Activated T-helper 1 cell treated with anti-CD3 and anti-CD28 coated beads, Interleukin-12 subunit alpha, Interleukin-12 subunit beta, Interleukin-2, Interleukin-4 antibody, amounts not matched to agents 30 ng/mL and 10 ng/mL and 1 ng/mL, durations not matched to agents 14 hours and 24 hours and 36 hours (primary cell): ENCODE measurements at regions of chr12 and their contacts with region 1.

Region 1: DNA sequence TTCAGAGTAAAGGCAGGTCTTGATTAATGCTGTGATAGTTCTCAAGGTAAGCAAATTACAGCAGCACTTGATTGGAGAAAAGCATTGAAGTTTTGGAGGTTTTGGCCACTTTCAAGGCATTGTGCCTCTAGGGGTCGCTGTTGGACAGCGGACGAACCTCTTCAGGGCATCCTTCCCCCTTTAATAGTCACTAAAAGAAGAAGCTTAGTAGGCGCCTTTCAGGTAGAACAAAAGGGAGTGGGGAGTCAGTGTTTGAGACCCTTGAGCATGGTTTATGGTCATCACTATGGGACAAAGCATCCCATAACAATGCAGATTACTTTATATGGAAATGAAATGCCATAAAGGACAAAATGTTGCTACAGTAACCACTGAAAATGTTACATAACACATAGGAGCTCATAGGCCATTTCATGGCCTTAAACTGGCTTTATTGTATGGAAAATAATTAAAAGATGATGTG is 199.5 kb upstream of the DCN start:
- DNase-seq: peak; percentile 68
- H3K4me3 Mint-ChIP-seq: peak overlapping the region; percentile 76
- H3K27ac Mint-ChIP-seq: no peak overlapping the region
- H3K4me1 Mint-ChIP-seq: peaks cover 10% of the 10 kb centered on the region
- H3K27me3 Mint-ChIP-seq: peaks cover 5% of the 10 kb centered on the region

Region 2: DNA sequence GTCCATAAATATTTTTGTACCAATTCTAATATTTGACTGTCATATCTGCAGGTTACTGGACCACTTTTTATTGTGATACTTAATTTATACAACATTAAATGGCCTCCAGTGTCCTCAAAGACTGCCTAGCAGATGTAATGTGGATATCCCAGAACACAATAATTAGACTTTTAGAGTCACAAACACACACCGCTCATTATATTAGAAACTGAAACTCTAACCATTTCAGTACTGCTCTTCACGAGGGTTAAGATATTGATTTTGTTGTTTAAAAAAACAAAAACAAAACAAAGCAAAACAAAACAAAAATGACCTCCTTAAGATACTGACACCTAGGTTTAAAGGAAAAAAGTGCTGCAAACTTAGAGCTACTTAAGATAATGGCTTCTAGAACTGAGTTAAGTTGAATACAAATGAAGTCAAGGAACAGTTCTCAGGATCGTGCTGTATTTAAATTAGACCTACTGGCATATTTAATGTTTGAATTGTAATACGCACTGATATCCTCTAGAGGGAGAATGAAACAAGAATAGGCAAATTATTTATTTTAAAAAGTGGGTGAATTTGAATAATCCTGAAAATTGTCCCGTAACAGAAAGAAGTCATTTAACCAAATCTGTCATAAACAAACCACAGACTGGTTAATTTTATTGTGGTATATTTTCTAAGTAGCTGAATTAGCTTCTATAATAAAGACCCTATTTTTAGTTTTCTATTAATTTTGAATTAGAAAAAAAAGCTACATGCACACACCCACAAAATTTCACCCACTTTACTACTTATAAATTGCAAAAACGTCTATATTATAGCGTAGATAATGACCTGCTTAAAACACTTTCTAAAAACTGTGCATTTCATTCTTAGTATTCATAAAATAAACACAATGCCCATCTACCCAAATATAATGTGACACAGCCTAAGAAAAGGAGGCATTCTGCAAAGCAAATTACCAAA is 195.8 kb after region 1 on chr12:
- intact Hi-C with region 1: loop called (anchors 5 kb)
- DNase-seq: no peak
- H3K4me3 Mint-ChIP-seq: peak overlapping the region; percentile 62
- H3K27ac Mint-ChIP-seq: no peak overlapping the region
- H3K4me1 Mint-ChIP-seq: peaks cover 6% of the 10 kb centered on the region
- H3K27me3 Mint-ChIP-seq: peaks cover 15% of the 10 kb centered on the region

Region 3: DNA sequence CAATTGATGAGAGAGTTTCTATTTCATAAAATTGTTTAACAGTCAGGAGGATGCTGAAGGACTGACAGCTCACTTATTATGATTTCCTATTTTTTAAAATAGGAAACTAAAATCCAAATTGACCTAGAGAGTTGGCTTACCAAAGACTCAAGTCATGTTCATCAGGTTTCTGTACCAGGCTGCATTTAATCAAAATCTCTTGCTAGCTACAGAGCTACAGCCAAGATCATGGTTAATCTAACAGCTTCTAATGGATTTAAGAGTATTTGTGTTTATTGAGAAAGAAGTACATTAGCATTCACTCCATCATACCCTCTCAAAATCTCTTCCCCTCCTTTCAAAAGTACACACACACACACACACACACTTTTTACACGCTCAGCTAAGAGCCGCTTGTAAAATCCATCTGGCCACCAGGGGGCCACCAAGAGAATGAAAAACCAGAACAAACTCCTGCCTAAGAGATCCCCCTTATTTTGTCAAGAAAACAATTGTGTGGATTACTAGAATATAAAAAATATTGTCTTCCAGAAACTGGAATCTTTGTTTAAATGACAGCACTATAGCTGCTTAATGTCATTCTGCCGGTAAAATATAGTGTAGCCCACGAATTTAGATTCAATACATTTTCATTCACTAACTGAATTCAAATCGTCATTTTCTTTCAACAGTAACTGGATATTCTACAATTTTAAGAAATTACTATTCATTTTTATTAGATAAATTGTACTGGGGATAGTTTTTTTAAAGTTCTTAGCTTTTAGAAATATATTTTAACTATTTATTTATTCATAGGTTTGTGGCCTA is 429.6 kb after region 1 on chr12:
- intact Hi-C with region 1: loop called (anchors 1 kb)
- DNase-seq: peak; percentile 35
- H3K4me3 Mint-ChIP-seq: no peak overlapping the region
- H3K27ac Mint-ChIP-seq: no peak overlapping the region
- H3K4me1 Mint-ChIP-seq: peaks cover 10% of the 10 kb centered on the region
- H3K27me3 Mint-ChIP-seq: no peaks in the 10 kb centered on the region

Region 4: DNA sequence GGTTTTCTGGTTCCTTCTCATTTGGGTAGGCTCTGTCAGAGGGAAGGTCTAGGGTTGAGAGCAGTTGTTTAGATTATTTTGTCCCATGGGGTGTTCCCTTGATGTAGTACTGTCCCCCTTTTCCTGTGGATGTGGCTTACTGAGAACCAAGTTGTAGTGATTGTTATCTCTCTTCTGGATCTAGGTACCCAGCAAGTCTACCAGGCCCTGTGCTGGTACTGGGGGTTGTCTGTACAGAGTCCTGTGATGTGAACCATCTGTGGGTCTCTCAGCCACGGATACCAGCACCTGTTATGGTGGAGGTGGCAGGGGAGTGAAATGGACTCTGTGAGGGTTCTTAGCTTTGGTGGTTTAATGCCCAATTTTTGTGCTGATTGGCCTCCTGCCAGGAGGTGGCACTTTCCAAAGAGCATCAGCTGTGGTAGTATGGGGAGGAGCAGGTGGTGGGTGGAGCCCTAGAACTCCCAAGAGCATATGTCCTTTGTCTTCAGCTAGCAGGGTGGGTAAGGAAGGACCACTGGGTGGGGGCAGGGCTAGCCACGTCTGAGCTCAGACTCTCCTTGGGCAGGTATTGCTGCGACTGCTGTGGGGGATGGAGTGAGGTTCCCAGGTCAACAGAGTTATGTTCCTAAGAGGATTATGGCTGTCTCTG is 942.9 kb after region 1 on chr12:
- intact Hi-C with region 1: loop called (anchors 10 kb)
- DNase-seq: no peak
- H3K4me3 Mint-ChIP-seq: no peak overlapping the region
- H3K27ac Mint-ChIP-seq: no peak overlapping the region
- H3K4me1 Mint-ChIP-seq: peaks cover 28% of the 10 kb centered on the region
- H3K27me3 Mint-ChIP-seq: no peaks in the 10 kb centered on the region